Activated CD4-positive, alpha-beta memory T cell treated with anti-CD3 and anti-CD28 coated beads, Interleukin-2, amount 10 ng/mL, durations not matched to agents 7 days and 5 days (primary cell): ENCODE measurements at regions of chr18 and their contacts with region 1.

Region 1: DNA sequence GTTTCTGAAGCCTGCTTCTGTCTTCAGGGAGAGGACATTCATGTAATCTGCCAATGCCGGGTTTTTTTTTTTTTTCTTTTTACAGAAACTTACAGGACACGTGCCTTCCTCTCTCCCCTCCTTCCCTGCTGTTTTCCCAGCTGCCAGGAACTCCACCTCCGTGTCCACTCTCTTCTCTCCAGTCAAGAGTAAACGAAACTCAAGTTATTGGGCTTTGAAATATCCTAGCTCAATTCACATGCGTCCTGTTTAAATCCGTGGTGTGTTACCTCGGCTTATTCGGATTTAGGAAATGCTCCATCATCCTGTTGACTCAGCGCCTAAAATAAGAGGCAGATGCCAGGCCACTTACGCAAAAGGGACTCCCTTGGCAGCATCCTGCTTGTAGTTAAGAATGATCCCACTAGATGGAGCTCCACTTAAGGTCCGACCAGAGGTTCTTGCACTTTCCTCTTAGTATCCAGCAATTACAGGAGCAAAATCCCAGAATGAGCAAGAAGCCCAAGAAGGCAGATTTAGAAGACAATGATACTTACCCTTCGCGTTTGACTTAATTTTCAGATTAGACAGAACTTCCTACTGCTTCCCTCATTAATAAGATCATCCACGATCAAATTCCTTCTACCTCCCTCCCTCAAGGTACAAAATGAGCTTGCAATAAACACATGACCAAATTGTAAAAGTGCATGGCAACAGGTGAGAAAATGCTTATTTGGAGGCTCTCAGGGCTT is 97.2 kb upstream of the ZCCHC2 start:
- DNase-seq: peak; percentile 64
- H3K4me3 Mint-ChIP-seq: no peak overlapping the region
- H3K27ac Mint-ChIP-seq: peak overlapping the region; percentile 16
- H3K4me1 Mint-ChIP-seq: peaks cover 47% of the 10 kb centered on the region
- H3K27me3 Mint-ChIP-seq: no peaks in the 10 kb centered on the region

Region 2: DNA sequence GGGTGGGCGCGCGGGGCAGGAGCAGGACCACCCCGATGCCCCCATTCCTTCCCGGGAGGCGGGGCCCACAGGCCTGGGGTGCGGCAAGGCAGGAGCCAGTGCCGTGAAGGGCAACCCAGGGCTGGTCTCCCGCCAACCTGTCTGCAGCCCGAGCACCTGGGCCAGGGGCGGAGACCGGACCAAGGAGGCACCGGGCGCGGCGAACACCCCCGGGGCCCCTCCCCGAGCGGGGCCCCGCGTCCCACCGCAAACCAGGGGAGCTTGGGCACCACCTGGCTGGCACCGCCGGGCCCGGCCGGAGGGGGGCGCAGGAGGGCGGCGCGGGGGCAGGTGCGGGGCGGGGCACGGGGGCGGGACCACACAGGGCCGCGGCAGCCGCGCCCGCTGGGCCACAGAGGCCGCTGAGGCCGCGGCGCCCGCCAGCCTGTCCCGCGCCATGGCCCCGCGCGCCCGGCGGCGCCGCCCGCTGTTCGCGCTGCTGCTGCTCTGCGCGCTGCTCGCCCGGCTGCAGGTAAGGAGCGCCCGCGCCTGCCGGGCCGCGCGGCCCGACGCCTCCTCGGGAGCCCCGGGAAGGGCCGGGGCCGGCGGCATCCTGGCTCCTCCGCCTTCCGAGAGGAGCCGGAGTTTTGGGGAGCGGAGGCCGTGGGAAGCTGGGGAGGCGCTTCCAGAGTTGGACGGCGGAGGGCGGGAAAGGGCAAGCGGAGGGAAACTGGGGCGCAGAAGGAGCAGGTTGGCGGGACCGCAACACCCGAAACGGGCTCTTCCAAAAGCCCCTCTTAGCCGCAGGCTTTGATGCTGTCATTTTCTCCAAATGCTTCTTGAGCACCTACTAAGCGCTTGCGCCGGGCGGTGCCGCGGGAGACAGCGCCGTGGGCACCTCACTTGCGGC is 100.5 kb before region 1 on chr18 and contains the start of gene TNFRSF11A:
- CTCF ChIA-PET with region 1: interaction called, 3 read pairs
- POLR2A ChIA-PET with region 1: interaction called, 26 read pairs
- DNase-seq: peak; percentile 81
- H3K4me3 Mint-ChIP-seq: peak within 1 kb of the TSS; percentile 93
- H3K27ac Mint-ChIP-seq: peak within 1 kb of the TSS; percentile 45
- H3K4me1 Mint-ChIP-seq: peaks cover 54% of the 10 kb centered on the region
- H3K27me3 Mint-ChIP-seq: peaks cover 49% of the 10 kb centered on the region
- total RNA-seq, gene TNFRSF11A: 26.0 to 30.0 TPM

Region 3: GRCh38 chr18:62368100-62368499 is 57.5 kb before region 1 on chr18:
- CTCF ChIA-PET with region 1: interaction called, 8 read pairs
- POLR2A ChIA-PET with region 1: interaction called, 10 read pairs
- DNase-seq: no peak
- H3K4me3 Mint-ChIP-seq: no peak overlapping the region
- H3K27ac Mint-ChIP-seq: peak overlapping the region; percentile 40
- H3K4me1 Mint-ChIP-seq: peaks cover 64% of the 10 kb centered on the region
- H3K27me3 Mint-ChIP-seq: no peaks in the 10 kb centered on the region

Region 4: GRCh38 chr18:62407660-62408059 is 18.0 kb before region 1 on chr18:
- CTCF ChIA-PET with region 1: interaction called, 14 read pairs
- POLR2A ChIA-PET with region 1: interaction called, 15 read pairs
- DNase-seq: peak; percentile 48
- H3K4me3 Mint-ChIP-seq: no peak overlapping the region
- H3K27ac Mint-ChIP-seq: peak overlapping the region; percentile 29
- H3K4me1 Mint-ChIP-seq: peaks cover 11% of the 10 kb centered on the region
- H3K27me3 Mint-ChIP-seq: peaks cover 2% of the 10 kb centered on the region

Region 5: GRCh38 chr18:62505669-62506494 is 80.3 kb after region 1 on chr18:
- CTCF ChIA-PET with region 1: interaction called, 22 read pairs
- POLR2A ChIA-PET with region 1: interaction called, 15 read pairs
- DNase-seq: peak; percentile 48
- H3K4me3 Mint-ChIP-seq: peak overlapping the region; percentile 70
- H3K27ac Mint-ChIP-seq: peak overlapping the region; percentile 100
- H3K4me1 Mint-ChIP-seq: peaks cover 24% of the 10 kb centered on the region
- H3K27me3 Mint-ChIP-seq: no peaks in the 10 kb centered on the region

Region 6: GRCh38 chr18:62566199-62566598 is 140.6 kb after region 1 on chr18:
- CTCF ChIA-PET with region 1: interaction called, 11 read pairs
- POLR2A ChIA-PET with region 1: no interaction called
- DNase-seq: no peak
- H3K4me3 Mint-ChIP-seq: no peak overlapping the region
- H3K27ac Mint-ChIP-seq: no peak overlapping the region
- H3K4me1 Mint-ChIP-seq: peaks cover 11% of the 10 kb centered on the region
- H3K27me3 Mint-ChIP-seq: no peaks in the 10 kb centered on the region

Region 7: DNA sequence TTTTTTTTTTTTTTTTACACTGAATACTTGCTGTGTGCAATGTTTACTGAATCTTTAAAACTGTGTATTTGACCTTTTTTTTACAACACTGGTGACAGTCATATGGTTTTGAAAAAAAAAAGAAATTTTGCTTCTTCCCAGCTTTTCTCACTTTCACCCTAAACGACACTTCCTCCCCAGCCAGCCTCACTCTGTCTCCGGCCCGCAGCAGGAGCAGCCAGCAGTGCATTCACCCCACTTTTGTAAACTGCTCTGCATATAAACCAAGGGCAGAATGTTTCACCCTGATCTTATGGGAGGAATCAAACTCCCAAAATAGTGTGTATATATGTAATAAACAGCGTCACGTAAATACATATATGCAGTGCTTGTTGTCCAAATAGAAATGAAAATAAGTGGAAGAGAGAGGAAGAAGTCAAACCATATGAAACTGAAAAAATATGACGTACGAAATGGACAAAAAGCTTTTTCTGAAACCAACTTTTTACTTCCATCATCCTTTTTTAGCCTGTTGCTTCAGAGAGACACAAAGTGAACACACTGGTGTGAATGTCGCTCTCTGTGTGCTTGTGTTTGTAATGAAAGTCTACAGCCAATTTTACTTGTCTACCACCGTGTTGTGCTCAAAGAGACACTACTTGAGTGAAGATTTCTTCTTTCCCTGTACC is 151.3 kb after region 1 on chr18:
- CTCF ChIA-PET with region 1: no interaction called
- POLR2A ChIA-PET with region 1: no interaction called
- DNase-seq: no peak
- H3K4me3 Mint-ChIP-seq: no peak overlapping the region
- H3K27ac Mint-ChIP-seq: no peak overlapping the region
- H3K4me1 Mint-ChIP-seq: peaks cover 26% of the 10 kb centered on the region
- H3K27me3 Mint-ChIP-seq: no peaks in the 10 kb centered on the region